Dorsolateral prefrontal cortex (tissue), 120 donors: ENCODE measurements at regions of chr6 and their contacts with region 1.

Region 1: GRCh38 chr6:167683028-167683862 is 143.5 kb upstream of the AFDN start:
- DNase-seq: peak; percentile 23 to 90 (median 84)
- H3K4me3 ChIP-seq: peak overlapping the region in 9 of 59 donors; percentile 3 to 33 (median 17)
- H3K27ac ChIP-seq: peak overlapping the region in 58 of 59 donors; percentile 60 to 96 (median 90)
- H3K27me3 ChIP-seq: peaks cover 0 to 7% (median 0%) of the 10 kb centered on the region in 45 donors
- CTCF ChIP-seq: peak in 13 of 56 donors; percentile 7 to 36 (median 12)

Region 2: DNA sequence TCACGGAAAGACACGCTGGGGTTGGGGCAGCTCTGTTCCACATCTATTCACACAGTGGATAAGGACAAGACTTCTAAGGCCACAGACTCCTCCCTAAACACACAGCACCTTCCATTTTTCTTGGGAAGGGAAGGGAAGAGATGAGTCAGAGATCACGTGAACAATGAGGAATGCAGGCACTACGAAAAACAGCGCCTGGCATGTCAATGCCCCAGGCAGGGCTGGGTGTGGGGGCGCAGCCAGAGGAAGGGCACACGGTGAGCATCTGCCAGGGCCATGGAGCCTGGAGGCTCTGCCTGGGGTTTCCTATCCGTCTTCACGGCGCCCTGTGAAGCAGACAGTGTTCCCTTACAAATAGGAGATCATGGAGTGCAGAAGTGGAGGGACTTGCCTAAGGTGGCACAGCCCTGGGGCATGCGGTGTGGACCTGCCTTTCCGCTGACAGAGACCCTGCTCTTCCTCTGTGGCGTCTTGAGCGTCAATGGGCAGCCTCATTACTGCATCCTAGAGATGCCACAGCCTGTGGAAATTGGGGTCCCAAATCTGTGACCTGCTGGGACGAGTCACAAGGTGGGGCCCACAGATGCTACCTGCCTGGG is 376.7 kb before region 1 on chr6:
- intact Hi-C with region 1: no loop called
- DNase-seq: no peak
- H3K4me3 ChIP-seq: no peak overlapping the region
- H3K27ac ChIP-seq: no peak overlapping the region
- H3K27me3 ChIP-seq: peaks cover 0 to 6% (median 0%) of the 10 kb centered on the region in 45 donors
- CTCF ChIP-seq: no peak

Region 3: DNA sequence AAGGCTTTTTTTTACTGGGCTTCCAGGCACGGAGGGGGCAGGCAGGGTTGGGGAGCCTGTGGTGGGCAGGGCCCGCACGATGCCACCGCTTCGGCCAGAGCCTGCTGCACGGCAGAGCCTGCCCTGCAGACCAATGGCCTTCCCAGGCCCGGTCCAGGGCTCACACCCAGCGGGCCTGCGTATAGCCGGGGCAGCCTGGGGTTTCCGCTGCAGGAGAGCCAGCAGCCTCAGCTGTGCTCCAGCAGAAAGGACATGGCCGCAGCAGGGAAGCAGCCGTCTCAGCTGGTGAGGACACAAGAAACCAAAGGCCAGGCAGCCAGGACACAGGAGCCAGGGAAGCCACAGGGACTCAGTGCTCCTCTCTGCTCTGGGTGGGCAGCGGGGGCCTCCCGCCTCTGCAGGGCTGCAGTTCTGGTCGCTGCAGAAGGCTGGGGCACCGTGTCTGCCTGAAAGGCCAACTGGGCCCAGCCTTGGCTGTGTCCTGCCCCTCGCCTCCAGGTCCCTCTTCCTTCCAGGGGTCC is 267.7 kb before region 1 on chr6:
- intact Hi-C with region 1: no loop called
- DNase-seq: no peak
- H3K4me3 ChIP-seq: no peak overlapping the region
- H3K27ac ChIP-seq: no peak overlapping the region
- H3K27me3 ChIP-seq: no peaks in the 10 kb centered on the region
- CTCF ChIP-seq: no peak

Region 4: GRCh38 chr6:167485186-167485978 is 197.9 kb before region 1 on chr6:
- intact Hi-C with region 1: loop called in 1 of 2 experiments (anchors 5 kb)
- DNase-seq: peak in 1 of 10 donors; percentile 53
- H3K4me3 ChIP-seq: no peak overlapping the region
- H3K27ac ChIP-seq: no peak overlapping the region
- H3K27me3 ChIP-seq: peaks cover 0 to 5% (median 0%) of the 10 kb centered on the region in 45 donors
- CTCF ChIP-seq: peak; percentile 28 to 90 (median 70)

Region 5: GRCh38 chr6:167550941-167551627 is 132.2 kb before region 1 on chr6:
- intact Hi-C with region 1: loop called in 1 of 2 experiments (anchors 2 kb)
- DNase-seq: peak in 9 of 10 donors; percentile 40 to 85 (median 74)
- H3K4me3 ChIP-seq: peak overlapping the region in 17 of 59 donors; percentile 1 to 45 (median 9)
- H3K27ac ChIP-seq: peak overlapping the region in 29 of 59 donors; percentile 2 to 80 (median 49)
- H3K27me3 ChIP-seq: no peaks in the 10 kb centered on the region
- CTCF ChIP-seq: peak in 2 of 56 donors; percentile 8 to 11

Region 6: DNA sequence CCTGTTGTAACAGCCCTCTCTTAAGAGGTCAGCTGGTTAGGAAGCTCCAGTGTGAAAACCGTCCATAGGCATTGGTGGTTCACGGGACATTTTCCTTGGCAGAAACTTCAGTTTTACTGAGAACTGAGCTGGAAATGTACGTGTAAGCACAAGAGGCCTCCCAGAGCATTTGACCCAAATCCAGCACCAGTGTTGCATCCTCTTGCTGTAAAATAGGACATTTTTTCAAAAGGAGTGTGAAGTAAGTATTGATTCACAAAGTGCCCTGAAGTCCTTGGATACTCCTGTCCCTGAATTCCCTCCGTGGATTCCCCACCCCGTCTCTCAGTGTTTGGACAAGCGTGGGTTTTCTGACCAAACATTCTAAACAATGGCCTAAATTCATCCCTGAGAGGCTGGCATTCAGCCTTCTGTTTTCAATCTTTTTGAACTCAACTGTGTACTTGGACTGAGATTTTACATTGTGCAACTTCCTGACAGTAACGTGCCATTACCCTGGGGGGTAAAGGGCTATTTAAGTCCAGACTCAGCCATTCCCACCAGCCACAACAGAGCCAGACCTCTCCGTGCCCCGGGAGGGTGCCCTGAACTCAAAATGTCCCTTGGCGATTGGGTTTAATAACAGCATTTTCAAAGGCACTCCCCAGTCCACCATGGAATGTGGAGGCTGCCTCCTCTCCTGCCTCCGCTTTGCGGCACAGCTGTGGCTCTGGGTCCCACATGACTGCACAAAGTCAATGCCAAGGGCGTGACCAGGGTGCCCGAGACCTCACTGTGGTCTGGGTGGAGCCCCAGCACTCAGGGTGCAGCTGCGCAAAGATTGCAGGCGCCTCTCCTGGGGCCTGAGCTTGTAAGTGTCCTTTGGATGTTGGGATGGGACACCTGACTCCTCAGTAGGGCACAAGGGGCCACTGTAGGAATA is 50.8 kb after region 1 on chr6:
- intact Hi-C with region 1: loop called in 1 of 2 experiments (anchors 5 kb)
- DNase-seq: no peak
- H3K4me3 ChIP-seq: no peak overlapping the region
- H3K27ac ChIP-seq: peak overlapping the region in 1 of 59 donors; percentile 7
- H3K27me3 ChIP-seq: peaks cover 0 to 3% (median 0%) of the 10 kb centered on the region in 45 donors
- CTCF ChIP-seq: no peak

Region 7: DNA sequence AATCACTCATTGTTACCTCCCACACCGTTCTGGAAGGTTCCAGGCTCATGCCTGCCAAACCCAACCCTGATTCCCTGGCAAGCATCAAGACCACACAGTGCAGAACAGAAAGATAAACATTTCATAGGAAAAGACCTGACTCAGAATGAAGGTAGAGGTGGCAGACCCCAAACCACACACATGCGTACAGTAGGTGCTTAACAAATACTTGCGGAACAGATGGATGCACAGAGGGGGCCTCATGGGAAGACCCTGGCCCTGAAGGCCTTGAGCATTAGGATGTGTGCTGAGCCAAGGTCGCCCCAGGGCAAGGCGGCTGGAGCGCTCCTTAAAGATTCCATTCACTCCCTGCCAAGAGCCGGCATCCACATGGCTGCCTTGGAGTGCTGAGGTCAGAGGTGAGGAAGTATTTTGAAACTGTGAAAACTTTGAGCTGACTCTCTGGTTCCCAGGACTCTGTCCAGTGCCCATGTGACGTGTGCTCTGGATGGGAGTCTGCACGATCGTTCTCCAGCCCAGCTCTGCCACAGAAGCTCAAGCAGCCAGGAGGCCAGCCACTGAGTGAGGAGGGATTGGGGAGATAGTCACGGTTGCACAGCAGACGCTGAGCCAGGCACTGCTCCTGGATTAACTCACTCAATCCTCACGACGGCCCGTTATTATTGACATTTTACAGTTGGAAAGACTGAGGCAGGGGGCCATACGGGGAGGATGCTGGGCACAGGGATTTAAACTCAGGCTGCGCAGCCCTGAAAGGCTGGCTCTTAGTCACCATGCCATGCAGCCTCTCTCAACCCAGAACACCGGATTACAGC is 77.9 kb after region 1 on chr6:
- intact Hi-C with region 1: loop called in 1 of 2 experiments (anchors 2 kb)
- DNase-seq: no peak
- H3K4me3 ChIP-seq: no peak overlapping the region
- H3K27ac ChIP-seq: peak overlapping the region in 5 of 59 donors; percentile 7 to 88 (median 33)
- H3K27me3 ChIP-seq: no peaks in the 10 kb centered on the region
- CTCF ChIP-seq: no peak

Region 8: GRCh38 chr6:167826230-167826895 is 143.1 kb after region 1 on chr6:
- intact Hi-C with region 1: loop called in 1 of 2 experiments (anchors 5 kb)
- DNase-seq: peak; percentile 52 to 84 (median 74)
- H3K4me3 ChIP-seq: peak overlapping the region; percentile 37 to 89 (median 74)
- H3K27ac ChIP-seq: peak overlapping the region in 43 of 59 donors; percentile 42 to 87 (median 74)
- H3K27me3 ChIP-seq: no peaks in the 10 kb centered on the region
- CTCF ChIP-seq: peak in 46 of 56 donors; percentile 9 to 53 (median 28)

Region 9: DNA sequence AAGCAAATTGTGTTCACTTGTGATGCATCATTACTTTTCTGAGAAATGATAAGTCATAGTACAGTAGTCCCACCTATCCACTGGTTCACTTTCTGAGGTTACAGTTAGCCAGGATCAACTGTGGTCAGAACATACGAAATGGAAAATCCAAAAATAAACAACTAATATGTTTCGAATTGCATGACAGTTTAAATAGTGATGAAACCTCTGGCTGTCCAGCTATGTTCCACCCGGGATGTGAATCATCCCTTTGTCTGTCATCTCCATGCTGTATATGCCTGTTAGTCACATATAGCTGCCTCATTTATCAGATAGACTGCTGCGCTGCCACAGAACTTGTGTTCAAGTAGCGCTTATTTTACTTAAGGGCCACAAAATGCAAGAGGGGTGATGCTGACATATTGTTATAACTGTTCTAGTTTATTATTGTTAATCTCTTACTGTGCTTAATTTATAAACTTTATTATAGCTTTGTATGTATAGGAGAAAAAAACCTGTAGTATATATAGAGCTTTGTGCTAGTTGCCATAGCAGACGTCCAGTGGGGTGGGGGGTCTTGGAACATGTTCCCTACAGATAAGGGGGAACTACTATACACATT is 172.7 kb after region 1 on chr6:
- intact Hi-C with region 1: no loop called
- DNase-seq: no peak
- H3K4me3 ChIP-seq: no peak overlapping the region
- H3K27ac ChIP-seq: no peak overlapping the region
- H3K27me3 ChIP-seq: no peaks in the 10 kb centered on the region
- CTCF ChIP-seq: no peak